Naive thymus-derived CD4-positive, alpha-beta T cell (primary cell): ENCODE measurements at regions of chr3 and their contacts with region 1.

Region 1: DNA sequence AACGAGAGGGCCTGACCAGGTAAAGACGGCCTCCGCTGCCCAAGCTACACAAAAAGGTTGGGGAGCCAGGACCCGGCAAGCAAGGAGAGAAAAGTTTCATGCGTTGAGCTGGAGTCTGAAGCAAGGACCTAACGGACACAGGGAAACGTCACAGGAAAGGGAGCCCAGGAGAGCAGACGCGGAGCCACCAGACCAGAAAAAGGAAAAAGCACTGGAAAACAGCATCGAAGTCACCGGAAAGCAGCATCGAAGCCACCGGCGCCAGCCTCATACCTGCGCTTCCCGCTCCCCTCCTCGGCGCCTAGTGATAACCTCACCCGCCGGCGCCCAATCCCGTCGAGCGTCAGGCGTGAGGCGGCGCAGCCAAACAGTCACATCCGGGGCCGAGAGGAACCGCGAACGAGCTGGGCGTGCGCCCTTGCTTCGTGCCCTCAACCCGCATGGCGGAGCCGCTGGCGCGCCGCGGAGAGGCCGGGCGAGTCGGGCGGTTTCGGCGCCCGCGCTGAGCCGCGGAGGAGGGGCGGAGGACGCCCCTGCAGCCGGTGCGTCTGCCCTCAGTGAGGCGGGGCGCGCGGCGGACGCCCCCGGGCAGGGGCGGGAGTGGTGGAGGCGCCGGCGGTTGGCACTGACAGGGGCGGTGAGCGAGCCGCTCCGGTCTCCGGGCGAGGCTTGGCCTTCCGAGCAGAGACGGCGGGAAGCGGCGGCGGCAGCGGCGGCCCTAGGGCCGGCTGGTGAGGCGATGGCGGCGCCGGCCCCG is at the starts of genes FBXO45 and WDR53:
- DNase-seq: peak; percentile 88 to 98 (median 95)
- ATAC-seq: peak; percentile 96
- H3K4me3 ChIP-seq: peak within 1 kb of the TSS; percentile 100
- H3K4me3 Mint-ChIP-seq: peak within 1 kb of the TSS; percentile 87 to 99 (median 95)
- H3K27ac ChIP-seq: peak within 1 kb of the TSS; percentile 87
- H3K27ac Mint-ChIP-seq: peak within 1 kb of the TSS; percentile 91 to 98 (median 96)
- H3K4me1 ChIP-seq: peaks cover 21 to 31% of the 10 kb centered on the region in 2 donors
- H3K4me1 Mint-ChIP-seq: peaks cover 23 to 53% (median 46%) of the 10 kb centered on the region in 7 donors
- H3K27me3 ChIP-seq: no peaks in the 10 kb centered on the region
- H3K27me3 Mint-ChIP-seq: no peaks in the 10 kb centered on the region
- total RNA-seq, gene FBXO45: 2.8 to 15.9 (median 7.1) TPM
- total RNA-seq, gene WDR53: 13.6 to 31.5 (median 22.7) TPM

Region 2: GRCh38 chr3:196081791-196082618 is 486.4 kb before region 1 on chr3 and contains the start of gene TFRC:
- CTCF ChIA-PET with region 1: no interaction called
- POLR2A ChIA-PET with region 1: no interaction called
- intact Hi-C with region 1: loop called in 1 of 2 experiments (anchors 1 kb)
- DNase-seq: peak; percentile 92 to 98 (median 95)
- ATAC-seq: peak; percentile 98
- H3K4me3 ChIP-seq: peak within 1 kb of the TSS; percentile 70
- H3K4me3 Mint-ChIP-seq: peak within 1 kb of the TSS; percentile 89 to 100 (median 96)
- H3K27ac ChIP-seq: peak within 1 kb of the TSS; percentile 96
- H3K27ac Mint-ChIP-seq: peak within 1 kb of the TSS; percentile 86 to 99 (median 95)
- H3K4me1 ChIP-seq: peaks cover 17 to 25% of the 10 kb centered on the region in 2 donors
- H3K4me1 Mint-ChIP-seq: peaks cover 22 to 46% (median 39%) of the 10 kb centered on the region in 7 donors
- H3K27me3 ChIP-seq: no peaks in the 10 kb centered on the region
- H3K27me3 Mint-ChIP-seq: no peaks in the 10 kb centered on the region
- total RNA-seq, gene TFRC: 51.3 to 417 (median 144) TPM

Region 3: GRCh38 chr3:196339493-196340254 is 228.8 kb before region 1 on chr3:
- CTCF ChIA-PET with region 1: no interaction called
- POLR2A ChIA-PET with region 1: no interaction called
- intact Hi-C with region 1: no loop called
- DNase-seq: no peak
- ATAC-seq: peak; percentile 35
- H3K4me3 ChIP-seq: no peak overlapping the region
- H3K4me3 Mint-ChIP-seq: no peak overlapping the region
- H3K27ac ChIP-seq: no peak overlapping the region
- H3K27ac Mint-ChIP-seq: no peak overlapping the region
- H3K4me1 ChIP-seq: no peaks in the 10 kb centered on the region
- H3K4me1 Mint-ChIP-seq: peaks cover 0 to 1% (median 0%) of the 10 kb centered on the region in 7 donors
- H3K27me3 ChIP-seq: no peaks in the 10 kb centered on the region
- H3K27me3 Mint-ChIP-seq: peaks cover 0 to 8% (median 0%) of the 10 kb centered on the region in 5 donors

Region 4: GRCh38 chr3:196502775-196503195 is 65.6 kb before region 1 on chr3:
- CTCF ChIA-PET with region 1: no interaction called
- POLR2A ChIA-PET with region 1: no interaction called
- intact Hi-C with region 1: loop called (anchors 1 kb)
- DNase-seq: peak; percentile 17 to 74 (median 49)
- ATAC-seq: peak; percentile 56
- H3K4me3 ChIP-seq: peak overlapping the region; percentile 94
- H3K4me3 Mint-ChIP-seq: peak overlapping the region; percentile 92 to 100 (median 98)
- H3K27ac ChIP-seq: peak overlapping the region; percentile 79
- H3K27ac Mint-ChIP-seq: peak overlapping the region; percentile 86 to 96 (median 95)
- H3K4me1 ChIP-seq: peaks cover 12 to 20% of the 10 kb centered on the region in 2 donors
- H3K4me1 Mint-ChIP-seq: peaks cover 27 to 47% (median 40%) of the 10 kb centered on the region in 7 donors
- H3K27me3 ChIP-seq: no peaks in the 10 kb centered on the region
- H3K27me3 Mint-ChIP-seq: peaks cover 0 to 10% (median 0%) of the 10 kb centered on the region in 5 donors

Region 5: DNA sequence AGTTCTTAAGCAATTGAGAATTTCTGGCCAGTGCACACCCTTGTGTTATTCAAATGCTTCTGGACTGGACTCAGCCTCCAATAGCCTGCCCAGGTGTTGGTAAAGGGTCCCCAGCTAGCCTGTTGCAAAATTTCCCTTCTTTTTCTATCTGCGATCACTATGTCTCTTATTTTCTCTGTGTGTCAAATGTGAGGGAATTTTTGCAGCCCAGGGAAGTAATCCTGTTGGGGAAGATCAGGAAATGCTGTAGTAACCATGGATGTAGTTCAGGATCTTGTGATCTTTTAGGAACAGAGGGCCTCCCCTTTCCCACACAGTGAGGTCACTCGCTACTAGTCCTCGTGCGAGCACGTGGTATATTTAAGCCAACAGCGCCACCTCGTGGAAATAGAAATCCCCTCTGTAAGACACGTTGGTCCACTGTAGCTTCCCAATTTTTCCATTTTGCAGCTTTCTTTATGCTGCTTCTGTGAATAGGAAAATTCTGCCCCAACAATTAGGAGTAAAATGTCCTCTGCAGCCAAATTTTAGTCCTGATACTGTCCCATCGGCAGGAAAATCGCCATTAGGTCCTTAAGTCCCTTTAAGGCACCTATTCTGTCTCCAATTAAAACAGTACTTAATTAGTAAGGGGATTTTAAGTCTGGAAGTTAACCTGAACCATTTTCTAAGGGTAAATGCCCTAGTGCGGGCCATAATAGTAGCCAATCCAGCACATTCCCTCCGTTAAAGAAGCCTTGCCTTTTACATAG is 49.3 kb before region 1 on chr3:
- CTCF ChIA-PET with region 1: no interaction called
- POLR2A ChIA-PET with region 1: no interaction called
- intact Hi-C with region 1: no loop called
- DNase-seq: peak in 3 of 9 donors; percentile 16 to 52 (median 19)
- ATAC-seq: peak; percentile 63
- H3K4me3 ChIP-seq: no peak overlapping the region
- H3K4me3 Mint-ChIP-seq: no peak overlapping the region
- H3K27ac ChIP-seq: no peak overlapping the region
- H3K27ac Mint-ChIP-seq: no peak overlapping the region
- H3K4me1 ChIP-seq: no peaks in the 10 kb centered on the region
- H3K4me1 Mint-ChIP-seq: no peaks in the 10 kb centered on the region
- H3K27me3 ChIP-seq: no peaks in the 10 kb centered on the region
- H3K27me3 Mint-ChIP-seq: peaks cover 0 to 6% (median 0%) of the 10 kb centered on the region in 5 donors

Region 6: GRCh38 chr3:196596355-196596754 is 27.9 kb after region 1 on chr3:
- CTCF ChIA-PET with region 1: no interaction called
- POLR2A ChIA-PET with region 1: interaction called, 13 read pairs
- intact Hi-C with region 1: loop called in 1 of 2 experiments (anchors 2 kb)
- DNase-seq: no peak
- ATAC-seq: no peak
- H3K4me3 ChIP-seq: no peak overlapping the region
- H3K4me3 Mint-ChIP-seq: no peak overlapping the region
- H3K27ac ChIP-seq: no peak overlapping the region
- H3K27ac Mint-ChIP-seq: peak overlapping the region in 1 of 9 donors; percentile 20
- H3K4me1 ChIP-seq: no peaks in the 10 kb centered on the region
- H3K4me1 Mint-ChIP-seq: peaks cover 0 to 15% (median 9%) of the 10 kb centered on the region in 7 donors
- H3K27me3 ChIP-seq: no peaks in the 10 kb centered on the region
- H3K27me3 Mint-ChIP-seq: peaks cover 0 to 33% (median 6%) of the 10 kb centered on the region in 5 donors

Region 7: DNA sequence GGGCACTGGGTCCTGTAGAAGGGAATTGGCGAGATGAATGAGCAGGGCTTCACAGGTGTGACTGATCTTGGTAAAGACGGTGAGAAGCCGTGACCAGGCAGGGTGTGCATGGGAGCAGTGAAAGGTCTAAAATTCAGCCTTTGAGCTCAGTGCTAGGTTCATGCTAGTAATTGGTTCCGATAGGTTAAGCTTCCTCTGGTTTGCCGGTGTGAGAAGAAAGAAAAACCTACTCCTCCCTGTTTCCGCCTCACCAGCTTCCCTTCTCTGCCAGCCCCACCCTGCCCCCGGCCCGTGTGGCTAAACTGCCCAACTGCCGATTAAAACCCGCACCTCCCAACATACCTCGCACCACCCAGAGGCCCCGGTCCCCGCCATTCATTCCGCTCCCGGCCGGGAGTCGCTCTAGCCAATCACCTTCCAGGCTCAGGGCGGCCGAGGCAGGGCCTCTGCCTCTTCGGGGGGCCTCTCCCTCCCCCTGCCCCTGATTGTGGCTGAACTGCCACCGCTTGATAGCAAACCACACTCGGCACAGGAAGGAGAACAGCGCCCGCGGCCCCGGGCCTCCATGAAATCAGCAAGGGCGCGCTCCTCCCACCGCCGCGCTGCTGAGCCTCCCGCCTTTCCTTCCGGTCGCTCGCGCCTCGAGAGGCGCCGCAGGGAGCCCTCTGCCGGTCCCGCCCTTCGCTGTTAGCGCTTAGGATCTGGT is 63.8 kb after region 1 on chr3:
- CTCF ChIA-PET with region 1: no interaction called
- POLR2A ChIA-PET with region 1: interaction called, 5 read pairs
- intact Hi-C with region 1: loop called (anchors 1 kb)
- DNase-seq: peak; percentile 69 to 91 (median 88)
- ATAC-seq: peak; percentile 89
- H3K4me3 ChIP-seq: peak overlapping the region; percentile 48
- H3K4me3 Mint-ChIP-seq: peak overlapping the region; percentile 80 to 96 (median 90)
- H3K27ac ChIP-seq: peak overlapping the region; percentile 78
- H3K27ac Mint-ChIP-seq: peak overlapping the region; percentile 93 to 99 (median 97)
- H3K4me1 ChIP-seq: peaks cover 30 to 31% of the 10 kb centered on the region in 2 donors
- H3K4me1 Mint-ChIP-seq: peaks cover 31 to 74% (median 62%) of the 10 kb centered on the region in 7 donors
- H3K27me3 ChIP-seq: no peaks in the 10 kb centered on the region
- H3K27me3 Mint-ChIP-seq: no peaks in the 10 kb centered on the region

Region 8: DNA sequence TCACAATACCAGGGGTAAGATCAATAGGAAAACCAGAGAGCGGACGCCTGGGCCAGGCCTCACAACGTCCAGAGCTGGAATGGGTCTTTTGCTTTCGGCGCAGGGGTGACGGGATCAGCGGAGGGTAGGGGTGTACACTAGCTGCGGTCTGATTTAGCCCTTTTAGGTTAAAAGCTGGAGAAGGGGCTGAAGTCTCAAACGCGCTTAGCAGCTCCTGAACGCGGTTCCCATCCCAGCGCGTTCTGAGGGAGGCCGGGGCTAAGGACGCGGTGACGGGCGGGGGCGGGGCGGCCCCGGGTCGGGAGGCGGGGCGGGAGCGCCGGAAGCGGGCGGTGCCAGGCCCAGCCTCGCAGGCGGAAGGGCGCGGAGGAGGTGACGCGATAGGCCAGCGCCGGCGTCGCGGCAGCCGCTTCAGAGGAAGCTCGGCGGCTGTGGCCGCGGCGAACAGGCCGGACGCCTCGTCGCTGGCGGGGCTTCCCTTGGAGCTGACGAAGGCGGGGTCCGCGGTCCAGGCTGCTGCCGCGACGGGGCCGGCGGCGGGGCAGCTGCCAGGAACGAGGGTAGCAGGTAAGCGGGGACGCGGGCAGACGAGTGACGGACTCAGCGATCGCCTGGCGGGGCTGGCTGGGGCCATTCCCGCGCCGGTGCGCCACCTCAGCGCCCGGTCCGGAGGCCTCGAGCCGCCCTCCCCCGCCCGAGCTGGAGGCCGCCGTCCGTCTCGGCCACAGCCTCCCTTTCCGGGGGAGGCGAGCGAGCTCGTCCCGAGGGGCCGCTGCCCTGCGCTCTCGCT is 299.3 kb after region 1 on chr3 and contains the start of gene SENP5:
- CTCF ChIA-PET with region 1: no interaction called
- POLR2A ChIA-PET with region 1: interaction called, 5 read pairs
- intact Hi-C with region 1: loop called (anchors 1 to 2 kb)
- DNase-seq: peak; percentile 79 to 92 (median 87)
- ATAC-seq: peak; percentile 99
- H3K4me3 ChIP-seq: peak within 1 kb of the TSS; percentile 86
- H3K4me3 Mint-ChIP-seq: peak within 1 kb of the TSS; percentile 90 to 99 (median 97)
- H3K27ac ChIP-seq: peak within 1 kb of the TSS; percentile 98
- H3K27ac Mint-ChIP-seq: peak within 1 kb of the TSS; percentile 90 to 99 (median 95)
- H3K4me1 ChIP-seq: peaks cover 13 to 16% of the 10 kb centered on the region in 2 donors
- H3K4me1 Mint-ChIP-seq: peaks cover 9 to 42% (median 34%) of the 10 kb centered on the region in 7 donors
- H3K27me3 ChIP-seq: no peaks in the 10 kb centered on the region
- H3K27me3 Mint-ChIP-seq: no peaks in the 10 kb centered on the region
- total RNA-seq, gene SENP5: 40.6 to 59.4 (median 43.1) TPM

Region 9: GRCh38 chr3:197554562-197555280 is 986.3 kb after region 1 on chr3:
- CTCF ChIA-PET with region 1: no interaction called
- POLR2A ChIA-PET with region 1: no interaction called
- intact Hi-C with region 1: loop called in 1 of 2 experiments (anchors 1 kb)
- DNase-seq: peak; percentile 76 to 93 (median 83)
- ATAC-seq: peak; percentile 97
- H3K4me3 ChIP-seq: peak overlapping the region; percentile 96
- H3K4me3 Mint-ChIP-seq: peak overlapping the region; percentile 91 to 95 (median 93)
- H3K27ac ChIP-seq: peak overlapping the region; percentile 89
- H3K27ac Mint-ChIP-seq: peak overlapping the region; percentile 57 to 94 (median 86)
- H3K4me1 ChIP-seq: peaks cover 7 to 9% of the 10 kb centered on the region in 2 donors
- H3K4me1 Mint-ChIP-seq: peaks cover 23 to 36% (median 31%) of the 10 kb centered on the region in 7 donors
- H3K27me3 ChIP-seq: no peaks in the 10 kb centered on the region
- H3K27me3 Mint-ChIP-seq: peaks cover 0 to 10% (median 6%) of the 10 kb centered on the region in 5 donors